Activated CD4-positive, alpha-beta memory T cell treated with anti-CD3 and anti-CD28 coated beads for 36 hours (primary cell): ENCODE measurements at regions of chr1 and their contacts with region 1.

Region 1: DNA sequence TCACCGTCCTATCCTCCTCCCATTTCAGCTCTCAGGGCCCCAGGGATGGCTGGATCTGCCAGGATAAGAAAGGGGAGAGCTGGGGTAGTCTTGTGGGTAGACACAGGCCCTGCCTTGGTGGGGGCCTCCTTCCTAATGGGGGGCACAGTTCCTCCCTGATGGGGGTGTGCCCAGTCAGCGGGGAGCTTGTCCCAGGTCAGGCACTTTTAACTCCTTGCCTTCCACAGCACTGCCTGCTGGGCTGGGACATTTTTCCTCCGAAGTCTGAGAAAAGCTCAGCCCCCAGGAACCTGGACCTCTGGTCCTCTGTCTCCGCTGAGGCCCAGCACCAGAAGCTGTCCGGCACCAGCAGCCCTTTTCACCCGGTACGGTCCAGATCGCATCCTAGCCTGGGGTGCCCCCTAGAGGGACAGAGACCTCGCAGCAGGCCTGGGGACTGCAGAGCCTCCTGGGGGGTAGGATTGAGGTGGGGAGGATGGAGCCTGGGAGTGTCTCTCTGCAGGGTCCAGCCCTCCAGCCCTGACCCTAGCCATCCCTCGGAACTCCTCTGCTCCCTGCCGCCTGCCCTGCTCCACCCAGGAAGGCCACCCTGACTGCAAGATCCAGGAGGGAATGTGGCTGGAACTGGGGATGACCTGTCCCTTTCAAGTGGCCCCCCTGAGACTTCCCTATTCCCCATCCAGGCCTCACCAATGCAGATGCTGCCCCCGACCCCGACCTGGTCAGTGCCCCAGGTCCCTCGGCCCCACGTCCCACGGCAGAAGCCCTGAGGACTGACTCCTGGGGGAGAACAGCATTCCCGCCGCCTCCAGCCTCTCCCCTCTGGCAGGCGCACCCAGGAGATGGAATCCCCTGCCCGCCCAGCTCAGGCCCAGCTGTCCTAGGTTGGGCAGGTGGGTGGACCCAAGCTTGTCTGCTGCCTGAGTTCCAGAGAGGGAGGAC is 12.0 kb downstream of the MIIP start:
- DNase-seq: peak; percentile 65
- H3K4me3 Mint-ChIP-seq: no peak overlapping the region
- H3K27ac Mint-ChIP-seq: no peak overlapping the region
- H3K4me1 Mint-ChIP-seq: no peaks in the 10 kb centered on the region
- H3K27me3 Mint-ChIP-seq: no peaks in the 10 kb centered on the region

Region 2: GRCh38 chr1:11940260-11940921 is 90.9 kb before region 1 on chr1:
- CTCF ChIA-PET with region 1: no interaction called
- POLR2A ChIA-PET with region 1: no interaction called
- intact Hi-C with region 1: no loop called
- DNase-seq: no peak
- H3K4me3 Mint-ChIP-seq: no peak overlapping the region
- H3K27ac Mint-ChIP-seq: no peak overlapping the region
- H3K4me1 Mint-ChIP-seq: no peaks in the 10 kb centered on the region
- H3K27me3 Mint-ChIP-seq: no peaks in the 10 kb centered on the region

Region 3: GRCh38 chr1:12001249-12001917 is 29.9 kb before region 1 on chr1:
- CTCF ChIA-PET with region 1: interaction called, 13 read pairs
- POLR2A ChIA-PET with region 1: no interaction called
- intact Hi-C with region 1: no loop called
- DNase-seq: peak; percentile 79
- H3K4me3 Mint-ChIP-seq: no peak overlapping the region
- H3K27ac Mint-ChIP-seq: peak overlapping the region; percentile 60
- H3K4me1 Mint-ChIP-seq: peaks cover 3% of the 10 kb centered on the region
- H3K27me3 Mint-ChIP-seq: no peaks in the 10 kb centered on the region